ENCODE measurements at regions of chr11 and their contacts with region 1.

Region 1: DNA sequence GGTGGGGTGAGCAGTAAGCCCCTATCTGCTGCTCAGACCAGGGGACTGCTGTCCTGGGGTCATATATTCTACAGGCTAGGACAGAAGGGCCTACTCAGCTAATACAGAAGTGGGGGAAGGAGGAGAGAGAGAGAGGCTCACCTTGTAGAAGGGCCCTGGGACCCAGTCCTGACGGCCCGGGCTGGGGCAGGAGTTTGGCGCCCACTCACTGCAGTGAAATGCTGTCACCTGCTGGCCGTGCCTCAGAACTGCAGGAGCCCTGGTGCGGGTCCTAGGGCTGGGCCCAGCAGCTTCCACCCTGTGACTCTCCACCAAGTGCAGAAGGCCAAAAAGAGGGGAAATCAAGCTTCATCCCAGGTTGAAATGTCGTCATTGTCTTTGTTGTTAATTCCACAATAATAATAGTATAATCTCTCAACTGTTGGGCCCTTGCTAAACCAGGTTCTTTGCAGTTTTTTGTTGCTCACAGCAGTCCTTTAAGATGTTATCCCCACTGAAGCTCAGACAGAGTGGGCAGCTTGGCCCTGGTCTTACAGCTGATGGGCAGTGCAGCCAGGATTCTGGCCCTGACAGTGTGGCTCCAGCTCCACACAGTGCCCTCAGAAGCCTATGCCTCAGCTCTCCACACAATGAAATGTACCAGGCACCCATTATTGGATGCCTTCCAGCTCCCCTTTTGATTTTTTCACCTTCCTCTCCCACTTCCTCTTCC is 29.6 kb downstream of the TRIM29 start:
- DNase-seq: no peak
- H3K4me3 ChIP-seq: no peak overlapping the region
- H3K27ac ChIP-seq: peak overlapping the region; percentile 5 to 48 (median 32)
- H3K4me1 ChIP-seq: peaks cover 0 to 14% (median 0%) of the 10 kb centered on the region in 3 donors
- H3K27me3 ChIP-seq: peaks cover 0 to 28% (median 0%) of the 10 kb centered on the region in 4 donors
- CTCF ChIP-seq: peak; percentile 96 to 99 (median 99)
- POLR2A ChIP-seq: no peak

Region 2: GRCh38 chr11:119481021-119481666 is 627.2 kb before region 1 on chr11:
- intact Hi-C with region 1: loop called (anchors 10 kb)
- DNase-seq: no peak
- H3K4me3 ChIP-seq: peak overlapping the region in 1 of 4 donors; percentile 33
- H3K27ac ChIP-seq: no peak overlapping the region
- H3K4me1 ChIP-seq: peaks cover 0 to 12% (median 4%) of the 10 kb centered on the region in 3 donors
- H3K27me3 ChIP-seq: peaks cover 0 to 10% (median 0%) of the 10 kb centered on the region in 4 donors
- CTCF ChIP-seq: peak; percentile 85 to 99 (median 97)
- POLR2A ChIP-seq: no peak

Region 3: DNA sequence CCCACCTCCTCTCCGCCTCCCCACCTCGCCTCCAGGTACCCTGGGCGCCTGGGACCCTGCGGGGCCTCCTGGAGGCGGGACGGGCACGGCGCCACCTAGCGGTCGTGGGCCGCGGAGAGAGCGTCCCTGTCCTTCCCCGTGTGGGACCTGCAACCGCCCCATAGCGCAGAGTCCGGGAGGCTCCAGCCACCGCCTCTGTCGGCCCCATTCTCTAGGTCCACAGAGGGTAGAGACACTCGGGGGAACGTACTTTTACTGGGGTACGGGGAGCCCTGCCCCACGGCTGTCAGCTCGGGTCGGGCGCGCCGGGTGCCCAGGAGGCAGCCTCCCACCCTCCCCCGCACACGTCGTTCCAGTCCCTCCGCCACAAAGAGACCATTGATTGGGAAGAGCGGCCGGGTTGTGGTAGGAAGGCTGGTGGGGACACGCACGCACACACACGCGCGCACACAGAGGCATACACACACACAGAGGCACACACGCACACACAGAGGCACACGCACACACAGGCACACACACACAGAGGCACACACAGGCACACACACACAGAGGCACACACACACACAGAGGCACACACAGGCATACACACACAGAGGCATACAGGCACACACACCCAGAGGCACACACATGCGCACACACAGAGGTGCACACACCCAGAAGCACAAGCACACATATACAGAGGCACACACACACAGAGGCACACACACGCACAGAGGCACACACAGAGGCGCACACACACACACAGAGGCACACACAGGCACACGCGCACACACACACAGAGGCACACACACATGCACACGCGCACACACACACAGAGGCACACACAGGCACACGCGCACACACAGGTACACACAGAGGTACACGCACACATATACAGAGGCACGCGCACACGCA is 366.7 kb before region 1 on chr11:
- intact Hi-C with region 1: loop called (anchors 10 kb)
- DNase-seq: no peak
- H3K4me3 ChIP-seq: peak overlapping the region in 2 of 4 donors; percentile 33 to 54
- H3K27ac ChIP-seq: peak overlapping the region in 1 of 4 donors; percentile 0
- H3K4me1 ChIP-seq: peaks cover 5 to 23% (median 11%) of the 10 kb centered on the region in 3 donors
- H3K27me3 ChIP-seq: peaks cover 0 to 45% (median 0%) of the 10 kb centered on the region in 4 donors
- CTCF ChIP-seq: peak; percentile 46 to 88 (median 76)
- POLR2A ChIP-seq: no peak

Measured in esophagus squamous epithelium (tissue), 5 donors.